Mammary epithelial cell (primary cell): ENCODE measurements at regions of chr10 and their contacts with region 1.

Region 1: DNA sequence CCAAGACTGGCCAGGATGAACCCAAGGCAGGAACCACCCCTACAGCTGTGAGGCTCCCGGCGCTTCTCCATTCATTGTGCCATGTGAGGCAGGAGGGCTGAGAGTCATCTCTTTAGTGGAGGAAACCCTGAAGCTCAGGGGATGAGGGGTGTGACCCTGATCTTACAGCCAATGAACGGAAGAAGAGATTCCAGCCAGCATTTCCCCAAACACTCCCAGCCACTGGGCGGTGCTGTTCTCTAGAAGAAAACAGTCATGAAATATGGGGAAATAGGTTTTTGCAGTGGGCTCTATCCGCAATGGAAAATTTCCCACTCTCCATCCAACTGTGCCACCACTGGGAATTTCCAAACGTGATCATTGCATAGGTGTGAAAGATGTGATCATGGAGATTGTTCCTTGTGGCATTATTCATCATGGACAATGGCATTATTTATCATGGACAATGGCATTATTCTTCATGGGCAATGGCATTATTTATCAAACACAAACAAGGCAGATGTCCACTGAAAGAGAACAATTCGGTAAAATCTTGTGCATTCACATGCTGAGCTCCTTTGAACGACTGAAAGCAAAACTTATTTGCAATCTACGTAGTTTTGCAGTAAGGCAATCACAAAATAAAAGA is 14.0 kb upstream of the SLC18A2 start:
- DNase-seq: peak; percentile 38
- H3K4me3 ChIP-seq: no peak overlapping the region
- H3K27ac ChIP-seq: no peak overlapping the region
- H3K4me1 ChIP-seq: no peaks in the 10 kb centered on the region
- H3K27me3 ChIP-seq: peaks cover 4% of the 10 kb centered on the region
- CTCF ChIP-seq: peak; percentile 70 to 92

Region 2: GRCh38 chr10:116947842-116948529 is 279.0 kb before region 1 on chr10:
- CTCF ChIA-PET with region 1: no interaction called
- dilution Hi-C with region 1: no loop called
- in situ Hi-C with region 1: no loop called
- intact Hi-C with region 1: no loop called
- DNase-seq: peak; percentile 12
- H3K4me3 ChIP-seq: no peak overlapping the region
- H3K27ac ChIP-seq: peak overlapping the region; percentile 16
- H3K4me1 ChIP-seq: peaks cover 18% of the 10 kb centered on the region
- H3K27me3 ChIP-seq: no peaks in the 10 kb centered on the region
- CTCF ChIP-seq: no peak

Region 3: GRCh38 chr10:117186832-117187615 is 39.9 kb before region 1 on chr10:
- CTCF ChIA-PET with region 1: no interaction called
- dilution Hi-C with region 1: no loop called
- in situ Hi-C with region 1: no loop called
- intact Hi-C with region 1: no loop called
- DNase-seq: peak; percentile 87
- H3K4me3 ChIP-seq: no peak overlapping the region
- H3K27ac ChIP-seq: no peak overlapping the region
- H3K4me1 ChIP-seq: peaks cover 21% of the 10 kb centered on the region
- H3K27me3 ChIP-seq: no peaks in the 10 kb centered on the region
- CTCF ChIP-seq: no peak

Region 4: DNA sequence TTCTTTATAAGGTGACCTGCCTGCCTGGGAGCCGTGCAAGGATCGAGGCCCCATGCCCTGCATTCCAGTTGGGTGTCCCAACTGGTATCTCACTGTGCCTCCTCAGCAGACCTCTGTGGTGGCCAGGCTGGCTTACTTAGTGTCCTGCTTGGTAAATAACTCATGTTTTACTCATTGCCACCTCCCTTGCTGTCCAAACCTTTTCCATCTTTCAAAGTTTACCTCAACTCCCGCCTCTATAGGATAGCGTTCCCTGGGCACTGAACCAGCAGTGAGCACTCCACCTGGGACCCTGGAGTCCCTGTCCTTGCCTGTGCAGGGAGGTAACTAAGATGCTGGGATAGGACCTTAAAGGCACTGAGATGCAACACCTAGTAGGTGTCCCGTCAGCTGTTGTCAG is 47.6 kb after region 1 on chr10:
- CTCF ChIA-PET with region 1: interaction called, 14 read pairs
- dilution Hi-C with region 1: no loop called
- in situ Hi-C with region 1: no loop called
- intact Hi-C with region 1: no loop called
- DNase-seq: no peak
- H3K4me3 ChIP-seq: no peak overlapping the region
- H3K27ac ChIP-seq: no peak overlapping the region
- H3K4me1 ChIP-seq: peaks cover 10% of the 10 kb centered on the region
- H3K27me3 ChIP-seq: no peaks in the 10 kb centered on the region
- CTCF ChIP-seq: no peak

Region 5: DNA sequence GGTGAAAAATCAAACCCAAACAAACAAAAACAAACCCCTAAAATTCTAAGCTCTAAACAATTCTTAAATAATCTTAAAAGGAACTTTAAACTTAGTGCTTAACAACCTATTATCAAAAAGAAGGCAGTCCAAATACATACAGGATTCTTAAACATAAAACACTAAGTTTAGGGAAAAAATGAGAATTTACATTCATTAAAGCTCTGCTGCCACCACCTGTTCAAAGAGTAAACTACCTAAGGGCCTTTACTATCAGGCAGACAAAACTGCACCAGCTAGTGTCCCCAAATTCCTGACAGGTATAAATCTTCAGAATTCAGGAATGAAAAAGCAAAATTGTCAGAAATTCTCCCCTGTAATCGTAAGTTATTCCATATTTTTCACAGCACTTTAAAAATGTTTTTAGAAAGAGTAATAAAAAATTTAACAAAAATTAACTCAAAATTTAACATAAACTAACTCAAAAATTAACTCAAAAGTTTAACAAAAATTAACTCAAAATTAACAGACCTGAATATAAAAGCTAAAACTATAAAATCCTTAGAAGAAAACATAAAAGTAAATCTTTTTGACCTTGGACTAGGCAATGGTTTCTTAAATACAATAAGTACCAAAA is 93.2 kb after region 1 on chr10:
- CTCF ChIA-PET with region 1: interaction called, 3 read pairs
- dilution Hi-C with region 1: no loop called
- in situ Hi-C with region 1: loop called in 1 of 2 experiments (anchors 10 kb)
- intact Hi-C with region 1: no loop called
- DNase-seq: no peak
- H3K4me3 ChIP-seq: no peak overlapping the region
- H3K27ac ChIP-seq: no peak overlapping the region
- H3K4me1 ChIP-seq: no peaks in the 10 kb centered on the region
- H3K27me3 ChIP-seq: no peaks in the 10 kb centered on the region
- CTCF ChIP-seq: peak; percentile 67 to 70

Region 6: GRCh38 chr10:117483056-117483604 is 256.2 kb after region 1 on chr10:
- CTCF ChIA-PET with region 1: interaction called, 3 read pairs
- dilution Hi-C with region 1: no loop called
- in situ Hi-C with region 1: loop called in 1 of 2 experiments (anchors 10 kb)
- intact Hi-C with region 1: no loop called
- DNase-seq: no peak
- H3K4me3 ChIP-seq: no peak overlapping the region
- H3K27ac ChIP-seq: no peak overlapping the region
- H3K4me1 ChIP-seq: peaks cover 3% of the 10 kb centered on the region
- H3K27me3 ChIP-seq: no peaks in the 10 kb centered on the region
- CTCF ChIP-seq: no peak

Region 7: DNA sequence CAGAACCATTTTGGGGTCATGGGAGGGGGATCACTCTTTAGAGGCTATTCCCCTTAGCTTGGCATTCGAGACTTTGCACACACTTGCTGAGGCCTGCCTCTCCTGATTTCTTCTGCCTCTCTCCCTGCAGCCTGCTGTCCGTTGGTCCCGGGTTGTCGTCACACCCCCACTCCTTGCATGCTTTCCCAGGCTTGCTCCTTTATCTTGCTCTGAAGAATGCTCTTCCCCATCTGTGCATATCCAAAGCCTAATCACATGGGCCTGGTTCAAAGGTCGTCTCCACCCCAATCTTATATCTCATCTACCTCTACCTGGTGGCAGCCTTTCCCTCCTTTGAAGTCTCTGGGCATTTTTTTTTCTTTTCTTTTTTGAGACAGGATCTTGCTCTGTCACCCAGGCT is 291.3 kb after region 1 on chr10:
- CTCF ChIA-PET with region 1: no interaction called
- dilution Hi-C with region 1: no loop called
- in situ Hi-C with region 1: no loop called
- intact Hi-C with region 1: no loop called
- DNase-seq: no peak
- H3K4me3 ChIP-seq: no peak overlapping the region
- H3K27ac ChIP-seq: no peak overlapping the region
- H3K4me1 ChIP-seq: no peaks in the 10 kb centered on the region
- H3K27me3 ChIP-seq: peaks cover 9% of the 10 kb centered on the region
- CTCF ChIP-seq: no peak